Activated T-helper 1 cell treated with anti-CD3 and anti-CD28 coated beads, Interleukin-12 subunit alpha, Interleukin-12 subunit beta, Interleukin-2, Interleukin-4 antibody, amounts not matched to agents 30 ng/mL and 10 ng/mL and 1 ng/mL, durations not matched to agents 14 hours and 24 hours and 36 hours (primary cell): ENCODE measurements at regions of chr2 and their contacts with region 1.

Region 1: DNA sequence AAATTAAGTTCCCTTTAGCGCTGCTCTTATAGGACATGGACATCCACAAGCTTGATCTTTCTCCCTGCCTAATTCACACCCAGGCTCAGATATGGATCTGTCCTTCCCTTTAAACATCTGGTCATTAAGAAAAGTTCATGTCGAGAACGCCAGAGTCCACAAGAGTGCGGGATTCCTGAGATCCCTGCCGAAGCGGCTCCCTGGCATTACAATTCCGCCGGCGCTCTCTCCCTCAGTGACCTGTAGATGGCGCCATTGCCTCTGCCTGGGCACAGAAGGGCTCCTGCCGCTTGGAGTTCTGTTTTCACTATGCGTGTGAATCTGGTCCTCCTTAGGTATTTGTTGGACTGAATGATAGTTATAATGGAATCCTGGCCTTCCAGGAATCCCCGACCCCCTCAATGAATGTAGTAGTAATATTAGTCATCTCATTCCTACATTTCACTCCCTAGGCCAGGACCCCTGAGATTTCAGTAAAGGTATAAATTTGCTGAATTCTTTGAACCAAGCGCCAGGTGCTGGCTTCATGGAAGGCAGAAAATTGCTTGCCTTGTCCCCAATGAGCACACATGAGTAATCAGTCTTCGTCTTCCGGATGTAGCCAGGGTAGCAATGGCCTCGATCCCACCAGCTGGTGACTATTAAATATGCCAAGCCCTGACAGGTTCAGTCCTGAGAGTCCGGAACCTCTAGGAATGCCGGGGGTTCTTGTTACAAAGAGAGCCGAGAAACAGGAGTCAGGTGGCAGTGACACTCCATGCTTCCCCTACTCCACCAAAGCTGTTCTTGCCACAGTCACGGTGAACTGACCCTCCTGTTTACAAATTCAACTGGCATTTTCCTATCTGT is 26.4 kb upstream of the CD207 start:
- DNase-seq: peak; percentile 67
- H3K4me3 Mint-ChIP-seq: peak overlapping the region; percentile 8
- H3K27ac Mint-ChIP-seq: no peak overlapping the region
- H3K4me1 Mint-ChIP-seq: peaks cover 6% of the 10 kb centered on the region
- H3K27me3 Mint-ChIP-seq: peaks cover 14% of the 10 kb centered on the region

Region 2: GRCh38 chr2:70851704-70852103 is 10.3 kb before region 1 on chr2:
- intact Hi-C with region 1: loop called (anchors 1 kb)
- DNase-seq: peak; percentile 32
- H3K4me3 Mint-ChIP-seq: peak overlapping the region; percentile 23
- H3K27ac Mint-ChIP-seq: peak overlapping the region; percentile 32
- H3K4me1 Mint-ChIP-seq: peaks cover 26% of the 10 kb centered on the region
- H3K27me3 Mint-ChIP-seq: peaks cover 1% of the 10 kb centered on the region

Region 3: DNA sequence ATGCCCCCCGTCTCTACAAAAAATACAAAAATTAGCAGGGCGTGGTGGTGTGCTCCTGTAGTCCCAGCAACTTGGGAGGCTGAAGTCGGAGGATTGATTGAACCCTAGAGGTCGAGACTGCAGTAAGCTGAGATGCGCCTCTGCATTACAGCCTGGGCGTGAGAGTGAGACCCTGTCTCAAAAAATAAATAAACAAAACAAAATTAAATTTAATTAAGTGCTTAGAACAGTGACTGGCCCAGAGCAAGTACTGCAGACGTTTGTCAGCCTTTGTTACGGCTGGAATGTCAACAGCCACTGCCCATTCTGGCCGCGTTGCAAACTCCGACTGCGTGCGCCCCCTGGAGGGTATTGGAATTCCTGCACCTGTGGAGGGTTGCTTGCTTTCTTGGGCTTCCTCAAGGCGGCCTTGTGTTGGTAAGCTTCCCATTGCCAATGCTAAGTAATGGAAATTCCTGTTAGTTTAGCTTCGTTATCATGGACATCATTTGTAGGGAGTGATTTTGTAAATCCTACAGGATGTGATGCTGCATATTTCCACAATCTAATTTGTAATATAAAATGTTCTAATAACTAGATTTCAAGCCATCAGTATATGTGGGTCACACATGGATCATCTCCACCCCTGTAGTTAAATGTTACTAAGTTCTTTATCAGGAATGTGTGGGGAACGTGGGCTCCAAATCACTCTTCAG is 57.8 kb after region 1 on chr2:
- intact Hi-C with region 1: loop called (anchors 1 kb)
- DNase-seq: peak; percentile 65
- H3K4me3 Mint-ChIP-seq: no peak overlapping the region
- H3K27ac Mint-ChIP-seq: no peak overlapping the region
- H3K4me1 Mint-ChIP-seq: no peaks in the 10 kb centered on the region
- H3K27me3 Mint-ChIP-seq: peaks cover 19% of the 10 kb centered on the region

Region 4: GRCh38 chr2:70948337-70949003 is 86.5 kb after region 1 on chr2:
- intact Hi-C with region 1: loop called (anchors 1 kb)
- DNase-seq: peak; percentile 67
- H3K4me3 Mint-ChIP-seq: peak overlapping the region; percentile 81
- H3K27ac Mint-ChIP-seq: no peak overlapping the region
- H3K4me1 Mint-ChIP-seq: peaks cover 16% of the 10 kb centered on the region
- H3K27me3 Mint-ChIP-seq: peaks cover 32% of the 10 kb centered on the region